ENCODE measurements at regions of chr10 and their contacts with region 1.

Region 1: GRCh38 chr10:52644373-52645186 is 128.0 kb downstream of the MBL2 start:
- DNase-seq: peak; percentile 70
- H3K4me3 Mint-ChIP-seq: no peak overlapping the region
- H3K27ac Mint-ChIP-seq: no peak overlapping the region
- H3K4me1 Mint-ChIP-seq: no peaks in the 10 kb centered on the region
- H3K27me3 Mint-ChIP-seq: no peaks in the 10 kb centered on the region

Region 2: GRCh38 chr10:52420656-52421055 is 223.9 kb before region 1 on chr10:
- intact Hi-C with region 1: no loop called
- DNase-seq: no peak
- H3K4me3 Mint-ChIP-seq: no peak overlapping the region
- H3K27ac Mint-ChIP-seq: no peak overlapping the region
- H3K4me1 Mint-ChIP-seq: no peaks in the 10 kb centered on the region
- H3K27me3 Mint-ChIP-seq: no peaks in the 10 kb centered on the region

Region 3: DNA sequence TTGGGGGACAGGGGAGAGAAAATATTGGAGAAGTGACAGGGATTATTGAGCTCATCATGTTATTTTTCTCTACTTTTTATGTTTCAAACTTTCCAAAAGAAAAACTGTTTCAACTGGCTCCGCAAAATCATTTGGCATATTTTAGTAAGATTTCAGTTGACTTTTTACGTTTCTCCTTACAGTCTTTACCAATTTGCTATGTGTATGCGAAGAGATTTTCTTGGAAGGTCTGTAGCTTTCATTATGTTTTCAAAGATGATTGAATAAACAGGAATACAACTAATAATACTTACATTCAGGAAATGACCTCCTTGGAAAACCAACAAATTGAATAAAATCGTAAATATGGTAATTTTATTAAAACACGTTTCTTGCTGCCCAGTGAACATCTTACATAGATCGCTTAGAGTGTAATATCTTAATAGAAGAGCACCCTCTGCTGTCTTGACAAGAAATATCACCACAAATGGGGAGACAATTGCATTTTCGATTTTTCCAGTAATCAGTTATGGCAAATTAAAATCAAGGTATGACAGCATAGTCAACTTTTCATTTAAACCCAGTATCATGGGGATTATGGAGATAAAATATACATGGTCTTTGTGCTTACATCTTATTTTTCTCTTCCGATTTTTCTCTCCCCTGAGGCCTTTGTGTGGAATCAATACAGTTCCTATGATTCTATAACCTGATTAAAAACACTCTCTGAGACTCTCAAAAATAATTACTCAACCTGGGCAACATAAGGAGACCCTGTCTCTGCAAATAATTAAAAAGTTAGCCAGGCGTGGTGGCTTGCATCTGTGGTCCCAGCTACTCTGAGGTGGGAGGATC is 84.9 kb after region 1 on chr10:
- intact Hi-C with region 1: loop called (anchors 1 kb)
- DNase-seq: no peak
- H3K4me3 Mint-ChIP-seq: no peak overlapping the region
- H3K27ac Mint-ChIP-seq: no peak overlapping the region
- H3K4me1 Mint-ChIP-seq: no peaks in the 10 kb centered on the region
- H3K27me3 Mint-ChIP-seq: no peaks in the 10 kb centered on the region